GM10248 (cell line): ENCODE measurements at regions of chr16 and their contacts with region 1.

Region 1: GRCh38 chr16:85393674-85394483 is 219.2 kb upstream of the GSE1 start:
- DNase-seq: peak; percentile 88
- CTCF ChIP-seq: peak; percentile 81

Region 2: DNA sequence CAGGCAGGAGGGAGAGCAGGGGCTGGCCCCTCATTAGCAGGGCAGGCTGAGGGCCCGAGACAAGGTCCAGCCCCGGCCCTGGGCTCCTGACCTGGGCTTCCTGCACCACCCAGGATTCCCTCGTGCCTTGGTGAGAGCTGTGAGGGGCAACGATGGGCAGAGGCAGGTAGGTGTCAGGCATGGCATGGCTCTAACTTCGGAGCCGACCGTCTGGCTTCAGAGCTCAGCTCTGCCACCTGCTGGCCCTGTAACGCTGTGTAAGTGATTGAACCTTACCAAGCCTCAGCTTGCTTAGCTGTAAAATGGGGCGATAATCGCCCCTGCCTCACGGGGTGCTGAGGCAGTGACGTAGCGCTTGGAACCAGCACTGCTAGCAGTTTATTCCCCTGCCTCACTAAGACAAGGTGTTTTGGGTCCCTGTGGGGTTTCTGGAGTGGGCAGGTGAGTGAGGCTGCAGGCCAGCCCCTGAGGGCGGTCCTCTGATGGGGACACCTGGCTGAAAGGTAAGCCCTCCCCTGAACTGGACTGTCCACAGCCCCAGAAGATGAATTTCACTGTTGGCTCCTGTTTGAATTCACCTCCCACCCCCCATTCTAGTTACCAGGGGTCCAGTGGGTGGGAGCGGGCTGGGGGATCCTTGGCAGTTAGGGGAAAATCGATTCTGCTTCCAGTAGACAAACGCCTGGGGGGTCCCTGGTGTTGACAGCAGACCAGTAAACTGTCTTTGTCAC is 34.5 kb after region 1 on chr16:
- CTCF ChIA-PET with region 1: interaction called, 10 read pairs
- POLR2A ChIA-PET with region 1: no interaction called
- DNase-seq: peak; percentile 79
- CTCF ChIP-seq: peak; percentile 82